ENCODE measurements at regions of chr9 and their contacts with region 1.

Region 1: GRCh38 chr9:10268531-10269485 is 344.0 kb downstream of the PTPRD start:
- DNase-seq: peak in 3 of 5 donors; percentile 14 to 37 (median 24)
- ATAC-seq: peak in 3 of 4 donors; percentile 71 to 81 (median 79)
- H3K4me3 ChIP-seq: no peak overlapping the region
- H3K27ac ChIP-seq: peak overlapping the region in 2 of 12 donors; percentile 27 to 28
- H3K4me1 ChIP-seq: peaks cover 0 to 7% (median 0%) of the 10 kb centered on the region in 12 donors
- H3K27me3 ChIP-seq: no peaks in the 10 kb centered on the region
- CTCF ChIP-seq: peak in 11 of 12 donors; percentile 26 to 60 (median 46)
- POLR2A ChIP-seq: no peak

Region 2: GRCh38 chr9:10232352-10232930 is 36.4 kb before region 1 on chr9:
- intact Hi-C with region 1: loop called in 1 of 10 experiments (anchors 5 kb)
- DNase-seq: no peak
- ATAC-seq: no peak
- H3K4me3 ChIP-seq: no peak overlapping the region
- H3K27ac ChIP-seq: no peak overlapping the region
- H3K4me1 ChIP-seq: no peaks in the 10 kb centered on the region
- H3K27me3 ChIP-seq: no peaks in the 10 kb centered on the region
- CTCF ChIP-seq: peak in 4 of 12 donors; percentile 7 to 23 (median 16)
- POLR2A ChIP-seq: no peak

Measured in heart left ventricle (tissue), 16 donors.